ENCODE measurements at regions of chr22 and their contacts with region 1.

Region 1: DNA sequence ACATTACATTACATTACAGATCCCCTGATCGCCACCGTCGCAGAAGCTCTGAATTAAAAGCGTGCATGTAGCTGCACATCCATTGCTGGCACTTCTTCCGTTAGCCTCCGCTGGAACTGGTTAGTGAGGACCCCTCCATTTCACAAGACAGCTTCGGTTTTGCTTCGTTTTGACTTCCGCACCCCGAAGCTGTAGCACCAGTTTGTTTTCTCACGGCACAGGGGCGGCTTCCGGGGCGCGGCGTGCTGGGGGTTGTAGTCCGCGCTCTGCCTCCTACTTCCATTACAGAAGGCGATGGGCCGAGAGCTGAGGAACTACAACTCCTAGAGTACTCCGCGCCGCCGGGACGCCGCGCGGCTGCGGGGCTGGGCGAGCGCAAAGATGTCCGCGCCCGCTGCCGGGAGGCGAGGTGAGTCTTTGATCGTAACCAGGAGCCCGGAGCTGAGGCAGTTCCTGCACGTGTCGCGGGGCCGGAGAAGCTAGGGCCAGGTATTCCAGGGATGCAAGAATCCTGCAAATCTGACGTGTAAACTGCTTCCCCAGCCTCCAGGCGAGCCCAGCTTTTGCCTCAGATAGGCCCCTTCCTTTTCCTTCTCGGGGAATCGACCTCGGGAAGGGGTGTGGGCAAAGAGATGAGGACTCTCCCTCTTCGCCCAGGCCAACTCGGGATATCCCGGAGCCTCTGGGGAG is at the start of gene PEX26:
- DNase-seq: peak; percentile 94
- H3K4me3 ChIP-seq: peak within 1 kb of the TSS; percentile 57 to 97 (median 81)
- H3K27ac ChIP-seq: peak within 1 kb of the TSS; percentile 80
- H3K4me1 ChIP-seq: peaks cover 25% of the 10 kb centered on the region
- H3K27me3 ChIP-seq: no peaks in the 10 kb centered on the region
- CTCF ChIP-seq: peak in 1 of 2 donors; percentile 1
- total RNA-seq, gene PEX26: 26.5 to 35.1 TPM

Region 2: DNA sequence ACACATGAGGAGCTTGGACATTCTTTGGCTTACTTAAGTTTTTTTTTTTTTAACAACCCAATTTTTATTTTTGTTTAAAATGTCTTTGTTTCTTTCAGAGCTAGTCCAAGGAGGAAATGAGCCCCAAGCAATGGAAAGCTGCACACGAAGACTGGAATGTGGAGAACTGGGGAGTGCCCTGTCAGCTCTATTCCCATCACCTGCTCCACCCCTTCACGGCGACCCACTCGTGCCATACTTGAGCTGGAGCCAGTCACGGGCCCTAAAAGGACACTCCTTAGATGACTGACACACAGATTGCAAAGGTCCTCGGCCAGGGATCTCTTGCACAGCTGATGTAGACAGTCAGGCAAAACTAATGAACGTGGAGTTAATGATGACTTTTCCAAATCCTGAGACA is 525.0 kb before region 1 on chr22:
- CTCF ChIA-PET with region 1: interaction called, 17 read pairs
- dilution Hi-C with region 1: no loop called
- in situ Hi-C with region 1: no loop called
- intact Hi-C with region 1: loop called (anchors 10 kb)
- DNase-seq: no peak
- H3K4me3 ChIP-seq: no peak overlapping the region
- H3K27ac ChIP-seq: no peak overlapping the region
- H3K4me1 ChIP-seq: no peaks in the 10 kb centered on the region
- H3K27me3 ChIP-seq: no peaks in the 10 kb centered on the region
- CTCF ChIP-seq: no peak

Region 3: DNA sequence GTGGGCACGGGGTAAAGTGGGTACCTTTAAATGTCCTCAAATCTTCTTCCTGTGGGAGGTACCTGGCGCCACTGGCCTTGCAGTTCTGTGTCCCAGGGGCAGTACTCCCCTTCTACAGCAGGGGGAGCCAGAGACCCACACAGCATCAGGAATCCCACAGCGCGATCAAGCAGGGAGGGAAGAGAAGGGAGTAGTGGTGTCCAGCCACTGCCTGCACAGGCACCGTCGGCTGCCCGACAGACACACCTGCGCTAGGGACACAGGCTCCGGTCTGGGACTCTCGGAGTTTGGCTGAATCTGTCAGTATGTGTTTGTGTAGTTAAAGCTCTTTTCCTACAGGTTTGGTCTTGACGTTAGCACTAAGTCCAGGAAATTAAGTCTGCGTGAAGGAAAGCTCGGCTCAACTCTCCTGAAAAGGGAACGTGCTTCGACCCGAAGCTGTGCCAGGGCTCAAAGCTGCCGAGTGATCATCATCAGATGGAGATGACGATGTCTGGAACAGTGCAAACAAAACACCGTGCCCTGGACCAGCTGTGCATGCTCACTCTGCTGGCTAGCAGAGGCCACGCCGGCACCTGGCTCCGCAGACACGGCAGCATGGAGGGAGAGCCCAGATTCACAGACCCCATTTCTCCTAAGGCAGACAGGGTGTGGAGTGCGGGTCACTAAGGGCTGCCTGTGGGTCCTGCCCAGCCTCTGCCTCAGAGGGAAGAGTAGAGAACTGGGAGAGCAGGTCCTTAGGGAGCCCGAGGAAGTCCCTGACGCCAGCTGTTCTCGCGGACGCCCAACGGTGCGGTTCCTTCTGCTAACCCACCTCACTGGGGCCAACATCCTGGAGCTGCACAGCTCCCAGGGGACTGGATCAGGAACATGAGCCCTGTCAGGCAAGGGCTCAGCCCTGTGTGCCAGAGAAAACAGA is 247.5 kb before region 1 on chr22:
- CTCF ChIA-PET with region 1: interaction called, 12 read pairs
- dilution Hi-C with region 1: no loop called
- in situ Hi-C with region 1: loop called in 1 of 2 experiments (anchors 10 kb)
- intact Hi-C with region 1: loop called (anchors 1 kb)
- DNase-seq: peak; percentile 79
- H3K4me3 ChIP-seq: no peak overlapping the region
- H3K27ac ChIP-seq: no peak overlapping the region
- H3K4me1 ChIP-seq: peaks cover 11% of the 10 kb centered on the region
- H3K27me3 ChIP-seq: no peaks in the 10 kb centered on the region
- CTCF ChIP-seq: peak; percentile 100

Region 4: DNA sequence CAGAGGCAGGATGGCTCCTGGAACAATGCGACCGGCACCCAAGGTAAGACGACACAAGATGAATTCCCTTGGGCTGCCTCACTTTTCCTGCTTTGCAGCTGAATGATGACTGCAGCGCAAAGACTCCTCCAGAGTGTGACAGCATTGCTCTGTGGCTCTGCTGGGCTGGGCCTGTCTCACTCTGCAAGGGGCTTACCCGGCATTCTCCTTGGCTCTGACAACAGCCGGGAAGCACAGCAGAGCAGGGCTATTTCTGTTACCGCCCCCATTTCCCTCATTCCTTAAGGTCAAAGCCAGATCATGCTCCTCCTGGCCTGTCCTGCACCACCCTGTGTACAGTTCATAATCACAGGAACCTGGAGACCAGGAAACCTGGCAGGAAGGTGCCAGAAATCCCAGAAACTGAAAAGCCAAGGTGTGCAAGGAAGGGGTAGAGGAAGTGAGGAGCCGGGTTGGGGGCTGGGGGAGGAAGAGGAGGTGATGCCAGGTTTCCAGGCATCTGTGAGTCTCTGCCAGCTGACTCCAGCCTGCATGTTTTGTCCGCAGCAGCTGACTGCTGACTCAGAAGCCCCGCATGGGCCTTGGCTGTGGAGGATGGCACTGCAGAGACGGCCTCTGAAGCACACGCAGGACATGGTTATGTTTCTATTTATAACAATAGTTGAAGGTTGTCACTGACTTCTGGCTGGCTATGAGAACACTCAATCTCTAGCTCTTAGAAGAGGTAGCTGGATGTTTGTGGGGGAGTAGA is 167.0 kb before region 1 on chr22:
- CTCF ChIA-PET with region 1: no interaction called
- dilution Hi-C with region 1: no loop called
- in situ Hi-C with region 1: loop called (anchors 5 to 10 kb)
- intact Hi-C with region 1: loop called (anchors 2 kb)
- DNase-seq: peak; percentile 70
- H3K4me3 ChIP-seq: no peak overlapping the region
- H3K27ac ChIP-seq: peak overlapping the region; percentile 14
- H3K4me1 ChIP-seq: peaks cover 21% of the 10 kb centered on the region
- H3K27me3 ChIP-seq: no peaks in the 10 kb centered on the region
- CTCF ChIP-seq: peak; percentile 36 to 57

Region 5: GRCh38 chr22:17980638-17981051 is 97.1 kb before region 1 on chr22:
- CTCF ChIA-PET with region 1: no interaction called
- dilution Hi-C with region 1: no loop called
- in situ Hi-C with region 1: no loop called
- intact Hi-C with region 1: no loop called
- DNase-seq: no peak
- H3K4me3 ChIP-seq: no peak overlapping the region
- H3K27ac ChIP-seq: no peak overlapping the region
- H3K4me1 ChIP-seq: no peaks in the 10 kb centered on the region
- H3K27me3 ChIP-seq: no peaks in the 10 kb centered on the region
- CTCF ChIP-seq: no peak

Region 6: GRCh38 chr22:18001040-18001893 is 76.5 kb before region 1 on chr22:
- CTCF ChIA-PET with region 1: interaction called, 12 read pairs
- dilution Hi-C with region 1: no loop called
- in situ Hi-C with region 1: loop called (anchors 5 to 10 kb)
- intact Hi-C with region 1: loop called (anchors 1 kb)
- DNase-seq: peak; percentile 95
- H3K4me3 ChIP-seq: peak overlapping the region; percentile 55 to 83 (median 79)
- H3K27ac ChIP-seq: peak overlapping the region; percentile 78
- H3K4me1 ChIP-seq: peaks cover 29% of the 10 kb centered on the region
- H3K27me3 ChIP-seq: no peaks in the 10 kb centered on the region
- CTCF ChIP-seq: peak; percentile 13 to 60